ENCODE measurements at regions of chr17 and their contacts with region 1.

Region 1: GRCh38 chr17:64506576-64507477 is at the start of gene CEP95:
- DNase-seq: peak; percentile 91
- ATAC-seq: peak; percentile 53
- H3K4me3 Mint-ChIP-seq: peak within 1 kb of the TSS; percentile 100
- H3K27ac Mint-ChIP-seq: peak within 1 kb of the TSS; percentile 100
- H3K4me1 Mint-ChIP-seq: peaks cover 50% of the 10 kb centered on the region
- H3K27me3 Mint-ChIP-seq: no peaks in the 10 kb centered on the region
- CTCF ChIP-seq: no peak
- total RNA-seq, gene CEP95: 65.3 and 77.0 TPM in 2 replicates

Region 2: GRCh38 chr17:63827002-63827771 is 679.6 kb before region 1 on chr17 and contains the starts of genes FTSJ3 and PSMC5:
- CTCF ChIA-PET with region 1: no interaction called
- POLR2A ChIA-PET with region 1: interaction called, 4 read pairs
- intact Hi-C with region 1: loop called (anchors 2 kb)
- DNase-seq: peak; percentile 90
- ATAC-seq: peak; percentile 95
- H3K4me3 Mint-ChIP-seq: peak within 1 kb of the TSS; percentile 98
- H3K27ac Mint-ChIP-seq: peak within 1 kb of the TSS; percentile 100
- H3K4me1 Mint-ChIP-seq: peaks cover 75% of the 10 kb centered on the region
- H3K27me3 Mint-ChIP-seq: no peaks in the 10 kb centered on the region
- CTCF ChIP-seq: no peak
- total RNA-seq, gene FTSJ3: 82.0 and 85.1 TPM in 2 replicates
- total RNA-seq, gene PSMC5: 157 TPM in 2 replicates

Region 3: DNA sequence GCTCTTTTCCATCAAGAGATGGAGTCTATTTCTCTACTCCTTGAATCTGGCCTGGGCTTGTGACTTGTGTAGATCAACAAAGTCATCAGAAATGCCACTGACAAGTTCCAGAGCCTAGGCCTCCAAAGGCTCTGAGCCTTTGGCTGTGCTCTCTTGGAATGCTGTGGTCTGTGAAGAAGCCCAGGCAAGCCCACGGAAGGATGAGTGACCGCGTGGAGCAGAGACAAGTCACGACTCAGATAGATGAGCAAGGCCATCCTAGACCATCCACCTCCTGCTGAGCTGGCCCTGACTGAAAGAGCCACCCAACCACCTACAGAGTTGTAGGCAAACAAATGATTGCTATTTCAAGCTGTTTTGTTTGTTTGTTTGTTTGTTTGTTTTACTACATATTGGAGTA is 474.7 kb before region 1 on chr17:
- CTCF ChIA-PET with region 1: no interaction called
- POLR2A ChIA-PET with region 1: no interaction called
- intact Hi-C with region 1: no loop called
- DNase-seq: no peak
- ATAC-seq: no peak
- H3K4me3 Mint-ChIP-seq: no peak overlapping the region
- H3K27ac Mint-ChIP-seq: no peak overlapping the region
- H3K4me1 Mint-ChIP-seq: no peaks in the 10 kb centered on the region
- H3K27me3 Mint-ChIP-seq: no peaks in the 10 kb centered on the region
- CTCF ChIP-seq: no peak

Region 4: GRCh38 chr17:64145757-64146417 is 360.9 kb before region 1 on chr17:
- CTCF ChIA-PET with region 1: no interaction called
- POLR2A ChIA-PET with region 1: interaction called, 18 read pairs
- intact Hi-C with region 1: loop called (anchors 2 kb)
- DNase-seq: peak; percentile 84
- ATAC-seq: peak; percentile 94
- H3K4me3 Mint-ChIP-seq: no peak overlapping the region
- H3K27ac Mint-ChIP-seq: no peak overlapping the region
- H3K4me1 Mint-ChIP-seq: peaks cover 16% of the 10 kb centered on the region
- H3K27me3 Mint-ChIP-seq: no peaks in the 10 kb centered on the region
- CTCF ChIP-seq: no peak

Region 5: DNA sequence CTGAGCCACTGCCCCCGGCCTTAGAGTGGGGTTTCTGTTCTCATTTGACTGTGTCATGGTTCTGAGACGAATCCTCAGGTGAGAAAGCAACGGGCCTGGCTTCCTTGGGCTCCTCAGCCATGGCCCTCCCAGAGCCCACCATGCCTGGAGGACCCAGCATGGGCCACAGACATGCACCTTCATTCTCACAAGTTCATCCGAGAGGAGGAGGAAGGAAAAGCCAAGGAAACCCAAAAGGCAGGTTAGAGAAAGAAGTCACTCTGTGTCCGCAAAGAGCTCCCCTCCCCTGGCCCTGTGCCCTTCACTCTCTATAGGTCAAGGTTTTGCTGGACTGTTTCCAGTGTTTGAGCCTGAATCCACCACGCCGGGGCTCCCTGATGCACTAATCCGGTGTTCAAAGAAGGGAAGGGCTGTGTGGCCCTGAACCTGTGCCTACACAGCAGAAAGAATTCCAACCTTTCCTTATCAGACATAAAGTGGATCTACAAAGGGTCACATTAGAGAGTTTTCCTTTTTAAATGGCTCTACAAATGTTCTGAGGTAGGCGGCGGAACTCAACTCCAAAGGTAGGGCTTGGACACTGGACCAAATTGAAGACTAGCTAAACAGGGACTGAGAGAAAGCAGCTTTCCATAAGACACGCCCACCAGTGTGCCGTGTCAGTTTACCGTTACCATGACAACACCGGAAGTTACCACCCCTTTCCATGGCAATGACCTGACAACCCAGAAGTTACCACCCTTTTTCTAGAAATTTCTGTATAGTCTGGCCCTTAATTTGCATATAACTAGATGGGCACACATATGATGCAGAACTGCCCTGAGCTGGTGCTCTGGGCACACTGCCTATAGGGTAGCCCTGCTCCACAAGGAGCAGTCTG is 100.3 kb before region 1 on chr17:
- CTCF ChIA-PET with region 1: no interaction called
- POLR2A ChIA-PET with region 1: interaction called, 32 read pairs
- intact Hi-C with region 1: no loop called
- DNase-seq: no peak
- ATAC-seq: no peak
- H3K4me3 Mint-ChIP-seq: no peak overlapping the region
- H3K27ac Mint-ChIP-seq: peak overlapping the region; percentile 50
- H3K4me1 Mint-ChIP-seq: peaks cover 74% of the 10 kb centered on the region
- H3K27me3 Mint-ChIP-seq: no peaks in the 10 kb centered on the region
- CTCF ChIP-seq: no peak

Region 6: DNA sequence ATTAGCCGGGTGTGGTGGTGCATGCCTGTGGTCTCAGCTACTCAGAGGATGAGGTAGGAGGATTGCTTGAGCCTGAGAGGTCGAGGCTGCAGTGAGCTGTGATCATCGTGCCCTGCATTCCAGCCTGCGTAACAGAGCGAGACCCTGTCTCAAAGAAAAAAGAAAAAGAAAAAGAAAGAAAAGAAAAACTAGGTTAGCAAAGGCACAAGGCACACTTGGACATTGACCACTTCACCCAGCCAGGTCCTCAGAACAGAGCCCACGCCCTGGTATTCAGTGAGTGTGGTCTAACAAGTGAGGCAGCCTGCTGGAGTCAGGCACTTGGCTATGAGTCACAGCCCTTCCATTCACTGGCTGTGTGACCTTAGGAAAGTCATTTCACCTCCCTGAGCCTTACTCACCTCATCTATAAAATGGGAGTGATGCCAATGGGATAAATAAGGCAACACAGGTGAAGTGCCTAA is 47.5 kb before region 1 on chr17:
- CTCF ChIA-PET with region 1: no interaction called
- POLR2A ChIA-PET with region 1: interaction called, 43 read pairs
- intact Hi-C with region 1: no loop called
- DNase-seq: no peak
- ATAC-seq: no peak
- H3K4me3 Mint-ChIP-seq: no peak overlapping the region
- H3K27ac Mint-ChIP-seq: no peak overlapping the region
- H3K4me1 Mint-ChIP-seq: peaks cover 47% of the 10 kb centered on the region
- H3K27me3 Mint-ChIP-seq: no peaks in the 10 kb centered on the region
- CTCF ChIP-seq: no peak

Region 7: DNA sequence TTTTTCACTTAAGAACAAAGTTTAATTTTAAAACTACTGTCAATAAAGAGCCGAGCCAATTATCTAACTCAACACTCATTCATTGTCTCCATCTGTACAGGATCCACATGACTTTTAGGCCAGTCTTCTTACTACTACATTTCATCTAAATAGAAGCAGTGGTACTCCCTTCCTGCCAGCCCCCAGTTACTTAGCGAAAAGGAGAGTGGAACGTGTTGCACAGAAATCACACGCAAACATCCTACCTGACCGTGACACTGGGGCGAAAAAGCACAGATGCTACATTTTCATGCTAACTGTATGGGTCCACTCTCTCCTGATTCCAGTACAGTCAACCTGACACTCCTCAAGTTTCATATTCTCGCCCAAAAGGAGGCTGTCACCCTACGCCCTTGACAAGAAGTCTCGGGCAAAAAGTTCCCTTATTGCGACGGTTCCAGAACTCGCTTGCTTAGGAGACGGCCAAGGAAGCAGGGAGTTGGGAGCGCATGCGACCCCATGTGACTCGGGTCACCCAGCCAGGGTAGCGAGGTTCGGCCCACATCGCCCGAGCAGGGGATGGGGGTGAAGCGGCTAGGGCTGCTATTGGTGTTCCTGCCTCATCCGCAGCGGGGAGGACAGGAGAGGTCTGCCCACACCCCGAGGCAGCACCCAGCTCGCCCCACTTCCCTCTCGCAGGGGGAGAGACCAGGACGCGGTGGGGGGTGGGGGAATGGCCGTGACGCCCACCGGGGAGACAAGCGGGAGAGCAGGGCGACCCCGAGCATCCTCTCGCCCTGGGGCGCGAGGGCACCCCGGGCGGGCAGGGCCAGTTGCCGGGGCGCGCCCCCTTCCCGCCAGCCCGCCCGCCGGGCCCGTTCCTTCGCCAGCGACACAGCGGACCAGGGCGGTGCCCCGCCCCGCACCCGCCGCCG is 548.8 kb after region 1 on chr17:
- CTCF ChIA-PET with region 1: no interaction called
- POLR2A ChIA-PET with region 1: interaction called, 4 read pairs
- intact Hi-C with region 1: loop called (anchors 5 kb)
- DNase-seq: peak; percentile 55
- ATAC-seq: peak; percentile 21
- H3K4me3 Mint-ChIP-seq: peak overlapping the region; percentile 96
- H3K27ac Mint-ChIP-seq: peak overlapping the region; percentile 90
- H3K4me1 Mint-ChIP-seq: peaks cover 55% of the 10 kb centered on the region
- H3K27me3 Mint-ChIP-seq: no peaks in the 10 kb centered on the region
- CTCF ChIP-seq: no peak

Measured in activated B cell treated with CpG ODN at 0.5 μM for 24 hours (primary cell).